Ovary (tissue), 10 donors: ENCODE measurements at regions of chr12 and their contacts with region 1.

Region 1: GRCh38 chr12:46332260-46332659 is 40.3 kb downstream of the SLC38A2 start:
- DNase-seq: no peak
- H3K4me3 ChIP-seq: no peak overlapping the region
- H3K27ac ChIP-seq: no peak overlapping the region
- H3K4me1 ChIP-seq: peaks cover 4% of the 10 kb centered on the region
- H3K27me3 ChIP-seq: no peaks in the 10 kb centered on the region
- CTCF ChIP-seq: no peak
- EP300 ChIP-seq: no peak
- POLR2A ChIP-seq: no peak

Region 2: DNA sequence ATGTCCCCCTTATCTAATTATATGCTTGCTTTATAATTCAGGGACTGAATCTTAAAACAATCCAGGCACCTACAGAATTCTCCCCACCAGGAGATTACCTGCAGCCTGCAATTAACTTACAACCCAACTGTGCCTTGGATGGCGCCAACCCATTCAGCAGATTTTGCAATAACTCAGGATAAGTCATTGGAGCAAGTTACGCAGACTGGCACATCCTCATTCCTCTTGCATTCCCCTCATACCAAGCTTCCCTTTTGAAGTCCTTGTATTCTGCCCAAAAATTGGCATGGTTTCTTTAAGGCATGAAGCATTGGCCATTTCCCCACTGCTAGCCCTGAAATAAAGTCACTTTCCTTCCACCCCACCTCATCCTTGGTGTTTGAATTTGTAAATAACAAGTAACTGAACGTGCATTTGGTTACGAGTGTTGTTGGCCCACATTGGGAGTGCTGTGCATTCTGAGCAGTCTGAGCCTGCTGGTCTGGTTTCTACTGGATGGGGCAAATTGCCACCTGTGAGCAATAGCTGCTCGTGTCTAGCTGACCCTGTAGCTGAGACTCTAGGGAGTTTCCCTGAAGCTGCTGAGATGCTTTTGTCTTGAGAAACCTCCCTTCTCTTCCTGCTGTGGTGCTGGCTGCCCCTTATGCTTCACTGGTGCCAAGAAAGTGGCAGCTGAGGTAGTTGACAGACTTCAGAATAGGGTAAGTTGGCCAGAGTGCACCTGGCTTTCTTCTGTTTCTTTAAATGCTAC is 242.7 kb before region 1 on chr12:
- intact Hi-C with region 1: no loop called
- DNase-seq: no peak
- H3K4me3 ChIP-seq: no peak overlapping the region
- H3K27ac ChIP-seq: no peak overlapping the region
- H3K4me1 ChIP-seq: no peaks in the 10 kb centered on the region
- H3K27me3 ChIP-seq: no peaks in the 10 kb centered on the region
- CTCF ChIP-seq: no peak
- EP300 ChIP-seq: no peak
- POLR2A ChIP-seq: no peak

Region 3: DNA sequence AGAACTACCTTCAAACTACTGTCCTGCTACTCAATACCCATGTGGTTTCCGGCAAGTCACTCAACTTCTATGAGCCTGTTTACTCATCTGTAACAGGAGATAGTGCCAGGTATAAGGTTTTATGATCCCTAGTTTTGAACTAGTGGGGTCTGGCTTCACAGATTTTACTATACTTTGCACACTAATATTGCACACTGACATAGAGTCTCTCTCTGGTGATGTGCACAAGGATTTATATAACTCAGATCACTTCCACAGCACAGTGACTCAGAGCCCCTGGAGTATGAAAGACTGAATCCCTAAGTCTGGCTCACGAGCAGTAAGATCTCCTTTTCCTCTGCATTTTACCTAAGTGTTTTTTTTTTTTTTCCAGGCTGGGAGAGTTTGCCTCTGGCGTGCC is 110.0 kb after region 1 on chr12:
- intact Hi-C with region 1: no loop called
- DNase-seq: no peak
- H3K4me3 ChIP-seq: no peak overlapping the region
- H3K27ac ChIP-seq: no peak overlapping the region
- H3K4me1 ChIP-seq: peaks cover 5% of the 10 kb centered on the region
- H3K27me3 ChIP-seq: no peaks in the 10 kb centered on the region
- CTCF ChIP-seq: no peak
- EP300 ChIP-seq: no peak
- POLR2A ChIP-seq: no peak

Region 4: DNA sequence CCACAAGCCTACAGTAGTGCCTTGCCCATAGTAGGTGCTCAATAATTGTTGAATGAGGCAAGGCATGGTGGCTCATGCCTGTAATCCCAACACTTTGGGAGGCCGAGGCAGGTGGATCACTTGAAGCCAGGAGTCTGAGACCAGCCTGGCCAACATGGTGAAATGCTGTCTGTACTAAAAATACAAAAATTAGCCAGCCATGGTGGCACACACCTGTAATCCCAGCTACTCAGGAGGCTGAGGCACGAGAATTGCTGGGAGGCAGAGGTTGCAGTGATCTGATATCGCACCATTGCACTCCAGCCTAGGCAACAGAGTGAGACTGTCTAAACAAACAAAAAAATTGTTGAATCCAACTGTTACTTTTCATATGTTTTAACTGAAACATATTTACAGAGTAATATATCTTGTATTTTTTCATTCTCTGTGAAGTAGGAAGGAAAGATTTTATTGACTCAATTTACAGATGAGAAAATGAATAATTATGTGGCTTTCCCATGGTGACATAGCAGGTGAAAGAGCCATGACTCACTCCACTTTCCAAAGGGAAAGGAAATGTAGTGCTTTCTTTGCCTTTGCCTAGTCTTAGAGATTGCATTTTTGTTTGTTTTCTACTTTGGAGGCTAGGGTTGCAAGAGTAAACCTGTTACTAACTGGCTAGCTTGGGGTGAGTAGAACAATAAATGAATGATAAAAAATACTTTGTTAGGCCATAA is 588.9 kb after region 1 on chr12:
- intact Hi-C with region 1: loop called in 1 of 4 experiments (anchors 10 kb)
- DNase-seq: no peak
- H3K4me3 ChIP-seq: no peak overlapping the region
- H3K27ac ChIP-seq: no peak overlapping the region
- H3K4me1 ChIP-seq: no peaks in the 10 kb centered on the region
- H3K27me3 ChIP-seq: no peaks in the 10 kb centered on the region
- CTCF ChIP-seq: no peak
- EP300 ChIP-seq: no peak
- POLR2A ChIP-seq: no peak